ENCODE measurements at regions of chr10 and their contacts with region 1.

Region 1: GRCh38 chr10:92087750-92088395 is 164.3 kb downstream of the BTAF1 start:
- DNase-seq: no peak
- H3K4me3 ChIP-seq: no peak overlapping the region
- H3K27me3 ChIP-seq: no peaks in the 10 kb centered on the region
- CTCF ChIP-seq: peak; percentile 79

Region 2: DNA sequence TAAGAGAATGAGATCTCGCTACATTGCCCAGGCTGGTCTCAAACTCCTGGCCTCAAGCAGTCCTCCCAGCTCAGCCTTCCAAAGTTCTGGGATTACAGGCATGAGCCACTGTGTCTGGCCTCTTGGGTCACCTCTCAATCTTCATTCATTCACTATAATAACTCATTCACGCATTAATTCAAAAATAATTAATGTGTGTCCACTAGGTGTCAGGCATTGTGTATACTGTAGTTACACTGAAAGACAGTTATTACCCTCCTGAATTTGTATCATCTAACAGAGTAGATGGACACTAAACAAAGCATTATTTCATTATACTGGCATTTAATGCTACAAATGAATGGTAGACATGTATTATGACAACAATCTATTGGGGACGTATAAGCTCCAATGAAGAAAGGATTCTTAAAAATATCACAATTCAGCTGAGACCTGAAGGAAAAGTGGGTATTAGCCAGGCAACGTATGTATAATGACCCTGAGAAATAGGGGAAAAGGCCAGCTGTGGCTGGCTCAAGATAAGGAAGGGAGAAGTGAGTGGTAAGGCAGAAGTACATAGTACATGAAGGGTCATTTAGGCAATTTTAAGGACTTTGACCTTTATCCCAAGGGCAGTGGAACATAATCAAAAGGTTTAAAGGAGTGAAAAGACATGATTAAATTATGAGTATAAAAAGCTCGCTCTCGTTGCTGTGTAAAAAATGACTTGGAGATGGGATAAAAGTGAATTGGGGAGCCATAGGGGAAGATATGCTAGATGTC is 13.6 kb before region 1 on chr10:
- CTCF ChIA-PET with region 1: interaction called, 10 read pairs
- POLR2A ChIA-PET with region 1: no interaction called
- DNase-seq: no peak
- H3K4me3 ChIP-seq: no peak overlapping the region
- H3K27me3 ChIP-seq: no peaks in the 10 kb centered on the region
- CTCF ChIP-seq: no peak

Region 3: DNA sequence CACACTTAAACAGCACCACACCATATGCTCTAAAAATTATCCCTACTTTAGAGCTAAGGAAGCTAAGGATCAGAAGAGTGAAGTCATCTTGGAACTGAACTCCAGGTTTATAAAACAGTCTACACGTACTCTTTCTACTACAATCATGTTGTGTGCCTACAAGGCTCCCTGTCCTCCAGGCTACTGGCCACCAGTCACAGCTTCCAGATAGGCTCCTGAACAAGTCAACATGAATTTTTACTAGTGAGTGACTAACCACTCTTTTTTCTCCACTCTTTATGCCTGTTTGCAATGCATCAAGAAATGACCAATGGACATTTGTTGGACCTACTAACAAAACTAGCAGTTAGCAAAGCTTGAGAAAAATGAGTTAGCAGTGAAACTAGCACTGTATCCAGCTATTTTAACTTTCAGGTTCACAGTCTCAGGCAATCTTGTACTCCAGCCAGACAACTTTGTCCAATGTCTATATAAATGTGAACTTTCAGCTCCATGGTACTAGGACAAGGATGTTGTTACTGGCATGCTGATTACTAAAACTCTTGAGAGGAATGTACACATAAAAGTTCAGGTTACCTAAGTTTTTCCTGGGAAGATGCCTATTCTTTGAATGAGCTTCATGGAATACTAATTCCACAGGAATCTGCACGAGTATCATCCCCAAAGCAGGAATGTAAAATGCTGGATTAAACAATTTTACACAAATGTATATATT is 15.7 kb after region 1 on chr10:
- CTCF ChIA-PET with region 1: interaction called, 14 read pairs
- POLR2A ChIA-PET with region 1: no interaction called
- DNase-seq: no peak
- H3K4me3 ChIP-seq: no peak overlapping the region
- H3K27me3 ChIP-seq: peaks cover 1% of the 10 kb centered on the region
- CTCF ChIP-seq: no peak

Region 4: GRCh38 chr10:92290837-92291615 is 203.2 kb after region 1 on chr10 and contains the starts of genes CPEB3 and MARCHF5:
- CTCF ChIA-PET with region 1: interaction called, 29 read pairs
- POLR2A ChIA-PET with region 1: no interaction called
- DNase-seq: peak; percentile 82
- H3K4me3 ChIP-seq: peak within 1 kb of the TSS; percentile 100
- H3K27me3 ChIP-seq: no peaks in the 10 kb centered on the region
- CTCF ChIP-seq: peak; percentile 76
- polyA plus RNA-seq, gene CPEB3: 0.28 TPM in 2 replicates
- polyA plus RNA-seq, gene MARCHF5: 13.1 and 23.2 TPM in 2 replicates

Region 5: GRCh38 chr10:92432596-92432995 is 344.7 kb after region 1 on chr10:
- CTCF ChIA-PET with region 1: interaction called, 46 read pairs
- POLR2A ChIA-PET with region 1: no interaction called
- DNase-seq: no peak
- H3K4me3 ChIP-seq: no peak overlapping the region
- H3K27me3 ChIP-seq: no peaks in the 10 kb centered on the region
- CTCF ChIP-seq: no peak

Measured in BJ (cell line).